Heart right ventricle (tissue), 16 donors: ENCODE measurements at regions of chr5 and their contacts with region 1.

Region 1: DNA sequence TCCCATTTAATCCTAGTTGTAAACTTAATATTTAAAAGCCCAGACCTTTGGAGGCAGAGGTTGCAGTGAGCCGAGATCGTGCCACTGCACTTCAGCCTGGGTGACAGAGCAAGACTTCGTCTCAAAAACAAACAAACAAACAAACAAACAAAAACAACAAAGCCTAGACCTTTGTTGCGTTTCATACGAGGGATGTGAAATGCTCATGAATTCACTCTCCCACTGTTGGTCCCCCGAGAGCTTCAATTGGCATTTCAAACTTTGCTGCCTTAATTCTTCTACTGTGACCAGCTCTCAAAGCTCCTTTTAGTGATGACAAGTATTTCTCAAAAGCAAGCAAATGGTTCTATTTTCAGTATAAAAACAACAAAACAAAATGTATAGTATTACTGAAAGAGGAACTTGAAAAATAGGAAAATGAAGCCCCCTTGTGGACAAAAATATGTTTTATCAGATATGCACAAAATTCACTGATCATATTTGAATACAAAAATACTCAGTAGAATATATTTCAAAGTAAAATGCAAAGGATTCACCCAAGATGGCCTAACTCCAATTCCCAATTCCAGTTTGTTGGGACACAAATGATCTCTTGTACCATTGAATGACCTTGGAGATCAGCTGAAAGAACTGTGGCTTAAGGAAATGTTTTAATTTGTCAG is 140.4 kb downstream of the ESM1 start:
- DNase-seq: no peak
- ATAC-seq: peak in 2 of 8 donors; percentile 37 to 78
- H3K4me3 ChIP-seq: peak overlapping the region in 7 of 10 donors; percentile 10 to 46 (median 36)
- H3K27ac ChIP-seq: peak overlapping the region in 3 of 10 donors; percentile 1 to 69 (median 13)
- H3K4me1 ChIP-seq: peaks cover 0 to 9% (median 5%) of the 10 kb centered on the region in 9 donors
- H3K27me3 ChIP-seq: no peaks in the 10 kb centered on the region
- CTCF ChIP-seq: peak; percentile 52 to 83 (median 72)

Region 2: DNA sequence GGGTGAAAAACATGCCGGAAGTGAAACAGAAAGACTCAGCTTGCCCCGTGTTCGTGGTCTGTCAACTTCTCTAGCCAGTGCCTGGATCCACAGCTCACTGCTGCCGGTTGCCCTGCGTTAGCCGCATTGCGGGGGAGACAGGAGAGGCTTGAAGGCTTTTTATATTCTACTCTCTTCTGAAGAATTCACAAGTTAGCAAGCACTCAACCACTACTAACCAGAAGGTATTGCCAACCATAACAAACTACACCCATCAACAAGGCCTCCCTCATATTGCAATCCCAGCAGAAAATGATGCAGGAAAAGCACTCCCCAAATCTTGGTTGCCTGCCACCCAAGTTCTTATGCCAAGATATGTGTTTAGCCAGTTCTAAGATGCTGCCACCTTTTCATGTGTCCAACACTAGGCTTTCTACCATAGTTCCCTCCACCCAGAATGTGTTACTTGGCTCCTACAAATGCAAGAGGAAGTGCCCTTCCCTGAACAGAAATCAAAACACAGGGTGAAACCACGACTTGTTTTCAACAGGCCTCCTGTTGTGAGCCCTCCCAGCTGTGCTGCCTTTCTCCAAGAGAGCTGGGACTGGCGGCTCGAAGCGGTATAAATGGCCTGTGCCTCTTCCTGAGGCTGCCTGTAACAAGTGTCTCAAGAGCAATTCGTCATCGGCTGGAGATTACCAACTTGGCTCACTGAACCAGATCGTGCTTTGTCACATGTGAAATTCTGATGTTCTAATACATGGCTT is 198.5 kb before region 1 on chr5:
- intact Hi-C with region 1: loop called in 3 of 10 experiments (anchors 10 kb)
- DNase-seq: peak; percentile 83
- ATAC-seq: peak; percentile 91 to 96 (median 93)
- H3K4me3 ChIP-seq: peak overlapping the region in 4 of 10 donors; percentile 10 to 24 (median 21)
- H3K27ac ChIP-seq: peak overlapping the region; percentile 5 to 87 (median 70)
- H3K4me1 ChIP-seq: peaks cover 15 to 51% (median 35%) of the 10 kb centered on the region in 9 donors
- H3K27me3 ChIP-seq: no peaks in the 10 kb centered on the region
- CTCF ChIP-seq: no peak

Region 3: GRCh38 chr5:54651482-54652076 is 193.5 kb before region 1 on chr5:
- intact Hi-C with region 1: loop called in 3 of 10 experiments (anchors 10 kb)
- DNase-seq: peak; percentile 82 to 85
- ATAC-seq: peak in 6 of 8 donors; percentile 55 to 76 (median 66)
- H3K4me3 ChIP-seq: no peak overlapping the region
- H3K27ac ChIP-seq: peak overlapping the region in 6 of 10 donors; percentile 11 to 77 (median 64)
- H3K4me1 ChIP-seq: peaks cover 5 to 49% (median 21%) of the 10 kb centered on the region in 9 donors
- H3K27me3 ChIP-seq: no peaks in the 10 kb centered on the region
- CTCF ChIP-seq: no peak

Region 4: GRCh38 chr5:54743997-54744788 is 100.8 kb before region 1 on chr5:
- intact Hi-C with region 1: loop called in 1 of 10 experiments (anchors 10 kb)
- DNase-seq: no peak
- ATAC-seq: peak in 7 of 8 donors; percentile 41 to 81 (median 71)
- H3K4me3 ChIP-seq: no peak overlapping the region
- H3K27ac ChIP-seq: peak overlapping the region in 8 of 10 donors; percentile 15 to 93 (median 46)
- H3K4me1 ChIP-seq: peaks cover 0 to 45% (median 21%) of the 10 kb centered on the region in 9 donors
- H3K27me3 ChIP-seq: no peaks in the 10 kb centered on the region
- CTCF ChIP-seq: no peak